Left ventricle myocardium superior (tissue), 1 donor: ENCODE measurements at regions of chr1 and their contacts with region 1.

Region 1: GRCh38 chr1:214123061-214123784 is 135.4 kb downstream of the PROX1 start:
- DNase-seq: peak; percentile 46
- ATAC-seq: peak; percentile 89

Region 2: DNA sequence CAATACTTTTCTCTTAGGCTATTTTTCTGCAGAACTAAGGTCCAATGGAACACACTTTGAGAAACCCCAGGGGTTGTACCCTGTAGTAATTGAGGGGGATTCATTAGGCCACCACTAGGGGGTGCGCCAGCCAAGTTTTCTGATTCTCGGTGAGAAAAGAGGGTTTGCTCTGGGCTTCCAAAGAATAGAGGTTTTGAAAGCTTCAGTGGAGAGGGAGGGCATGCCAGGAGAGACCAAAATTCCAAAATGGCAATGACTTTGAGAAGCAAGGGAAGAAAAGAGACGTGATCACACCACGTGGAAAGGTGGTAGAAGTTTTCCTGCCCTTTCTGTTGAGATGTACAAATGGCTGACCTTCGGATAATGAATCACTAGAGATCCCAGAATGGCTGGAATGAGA is 748.9 kb before region 1 on chr1:
- intact Hi-C with region 1: loop called (anchors 5 kb)
- DNase-seq: peak; percentile 67
- ATAC-seq: peak; percentile 79

Region 3: DNA sequence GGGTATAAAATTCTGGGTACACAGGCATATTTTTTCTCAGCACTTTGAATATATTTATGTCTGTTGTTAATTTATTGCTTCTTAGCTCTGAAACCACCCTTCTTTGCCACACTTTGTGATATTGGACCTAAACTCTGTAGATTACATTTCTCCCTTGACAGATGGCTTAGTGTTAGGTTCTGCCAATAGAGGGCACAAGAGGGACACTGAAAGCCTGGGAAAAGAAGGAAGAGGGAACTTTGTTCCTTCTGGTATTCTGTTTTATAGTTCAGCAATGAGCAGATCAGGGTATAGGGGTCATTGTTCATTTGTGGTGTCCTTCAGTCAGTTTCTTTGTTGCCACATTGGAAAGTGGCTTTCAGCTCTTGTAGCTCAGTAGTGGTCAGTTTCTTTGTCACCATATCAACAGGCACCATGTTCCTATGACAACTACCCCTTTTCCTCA is 559.0 kb before region 1 on chr1:
- intact Hi-C with region 1: loop called (anchors 10 kb)
- DNase-seq: no peak
- ATAC-seq: no peak

Region 4: DNA sequence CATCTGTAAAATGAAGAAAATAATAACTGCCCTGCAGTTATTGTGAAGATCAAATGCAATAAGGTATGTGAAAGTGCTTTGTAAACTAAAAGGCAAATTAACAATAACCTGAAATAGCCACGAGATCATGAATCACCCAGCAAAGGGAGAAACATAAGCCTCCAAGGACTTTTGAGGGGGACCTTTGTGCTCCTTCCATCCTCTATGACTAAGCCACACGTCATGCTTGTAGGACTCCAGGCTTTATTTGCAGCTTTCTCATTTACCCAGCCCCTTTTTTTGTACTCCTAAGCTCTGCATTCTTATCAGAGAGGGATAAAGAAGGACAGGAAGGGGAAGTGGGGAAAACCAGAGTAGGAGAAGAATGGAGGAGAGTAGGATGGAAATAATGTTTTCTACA is 20.3 kb before region 1 on chr1:
- intact Hi-C with region 1: no loop called
- DNase-seq: no peak
- ATAC-seq: no peak